ENCODE measurements at regions of chr2 and their contacts with region 1.

Region 1: DNA sequence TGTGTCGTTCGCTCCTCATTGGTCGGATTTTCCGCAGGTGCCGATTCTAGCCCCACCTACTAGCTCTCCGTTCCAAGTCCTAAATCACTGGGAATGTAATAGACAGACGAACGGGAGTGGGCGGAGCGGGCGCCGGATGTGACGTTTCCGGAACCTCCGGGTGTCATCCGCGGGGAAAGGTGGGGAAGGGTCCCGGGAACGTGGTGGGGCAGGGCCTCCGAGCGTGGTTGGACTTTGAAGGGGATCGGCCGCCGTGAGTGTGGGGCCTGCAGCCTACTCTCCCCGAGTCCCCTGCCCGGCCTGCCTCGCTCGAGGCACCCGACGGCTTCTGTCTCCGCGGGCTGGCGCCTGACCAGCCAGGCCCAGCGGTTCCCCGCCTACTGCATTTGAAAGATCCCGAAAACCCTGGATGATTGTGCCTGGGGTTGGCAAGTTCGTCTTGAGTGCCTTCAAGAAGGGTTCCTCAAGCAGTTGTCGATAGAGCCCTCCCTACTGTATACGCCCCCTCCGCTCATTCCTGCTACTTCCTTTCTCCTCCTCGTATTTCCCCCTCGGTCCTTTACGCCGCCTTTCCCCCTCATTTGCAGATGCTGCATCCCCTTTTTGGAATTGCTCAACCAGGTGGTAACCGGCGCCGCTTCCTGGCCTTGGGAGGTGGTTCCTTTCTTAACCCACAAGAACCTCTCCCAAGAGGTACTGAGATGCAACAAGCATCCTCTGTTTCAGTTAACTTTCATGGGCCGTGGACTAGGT is at the start of gene STAMBP:
- DNase-seq: peak; percentile 94
- H3K4me3 ChIP-seq: peak within 1 kb of the TSS; percentile 86 to 96
- H3K27ac ChIP-seq: peak within 1 kb of the TSS; percentile 87 to 88
- H3K4me1 ChIP-seq: peaks cover 14 to 19% of the 10 kb centered on the region in 2 experiments; a peak in 3 of 4 replicates
- H3K27me3 ChIP-seq: no peaks in the 10 kb centered on the region
- CTCF ChIP-seq: no peak
- EP300 ChIP-seq: no peak
- RAD21 ChIP-seq: no peak
- polyA plus RNA-seq, gene STAMBP: 42.2 and 54.5 TPM in 2 replicates

Region 2: GRCh38 chr2:73812635-73813034 is 16.4 kb before region 1 on chr2:
- CTCF ChIA-PET with region 1: interaction called, 25 read pairs
- POLR2A ChIA-PET with region 1: no interaction called
- DNase-seq: no peak
- H3K4me3 ChIP-seq: no peak overlapping the region
- H3K27ac ChIP-seq: no peak overlapping the region
- H3K4me1 ChIP-seq: no peaks in the 10 kb centered on the region
- H3K27me3 ChIP-seq: peaks cover 6% of the 10 kb centered on the region; the same call in 1 of the 2 replicates
- CTCF ChIP-seq: no peak
- EP300 ChIP-seq: no peak
- RAD21 ChIP-seq: no peak

Region 3: GRCh38 chr2:73839652-73840411 is 10.8 kb after region 1 on chr2:
- CTCF ChIA-PET with region 1: interaction called, 11 read pairs
- POLR2A ChIA-PET with region 1: no interaction called
- DNase-seq: no peak
- H3K4me3 ChIP-seq: no peak overlapping the region
- H3K27ac ChIP-seq: no peak overlapping the region; a peak in 1 of 4 replicates
- H3K4me1 ChIP-seq: peaks cover 0 to 9% of the 10 kb centered on the region in 2 experiments; a peak in 2 of 4 replicates
- H3K27me3 ChIP-seq: no peaks in the 10 kb centered on the region
- CTCF ChIP-seq: no peak
- EP300 ChIP-seq: no peak
- RAD21 ChIP-seq: no peak

Region 4: DNA sequence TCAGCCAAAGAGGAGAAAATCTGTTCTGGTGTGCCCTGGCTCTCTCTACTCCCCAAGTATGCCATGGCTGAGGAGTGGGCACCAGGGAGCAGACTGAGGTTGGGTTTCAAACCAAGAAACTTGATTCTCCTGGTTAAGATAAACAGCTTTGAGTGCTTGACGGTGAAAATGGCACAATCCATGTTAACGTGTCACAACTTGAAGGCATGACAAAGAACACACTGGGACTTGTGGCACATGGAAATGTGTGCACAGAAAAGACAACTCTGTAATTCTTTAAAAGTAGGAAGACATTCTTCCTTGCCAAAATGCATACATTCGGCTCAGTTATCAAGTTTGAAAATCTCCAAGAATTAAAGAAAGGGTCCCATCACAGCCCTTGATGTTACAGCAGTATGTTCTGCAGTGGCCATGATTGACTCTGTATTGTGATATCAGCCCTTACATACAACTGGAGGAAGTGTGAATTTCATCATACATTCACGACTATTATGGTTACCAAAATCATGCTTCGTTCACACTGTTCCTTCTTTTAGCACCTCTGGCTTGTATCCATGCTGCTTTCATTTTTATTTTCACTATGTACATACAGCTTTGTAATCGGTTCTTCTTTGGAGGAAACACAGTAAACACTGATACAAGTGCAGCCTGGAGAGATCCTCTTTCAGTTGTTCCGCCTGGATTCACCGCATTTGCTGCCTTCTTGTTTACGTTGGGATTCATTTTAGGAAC is 48.2 kb after region 1 on chr2:
- CTCF ChIA-PET with region 1: no interaction called
- POLR2A ChIA-PET with region 1: no interaction called
- DNase-seq: no peak
- H3K4me3 ChIP-seq: no peak overlapping the region
- H3K27ac ChIP-seq: no peak overlapping the region
- H3K4me1 ChIP-seq: no peaks in the 10 kb centered on the region
- H3K27me3 ChIP-seq: no peaks in the 10 kb centered on the region
- CTCF ChIP-seq: no peak
- EP300 ChIP-seq: no peak
- RAD21 ChIP-seq: no peak

Region 5: GRCh38 chr2:73987109-73987947 is 158.3 kb after region 1 on chr2:
- CTCF ChIA-PET with region 1: interaction called, 14 read pairs
- POLR2A ChIA-PET with region 1: no interaction called
- DNase-seq: peak; percentile 62
- H3K4me3 ChIP-seq: peak overlapping the region; percentile 41 to 42
- H3K27ac ChIP-seq: 0 out of 4 replicates have a peak overlapping the region, but pooled peaks of 1 of the 2 experiments have one; percentile 34
- H3K4me1 ChIP-seq: peaks cover 6 to 46% of the 10 kb centered on the region in 2 experiments; a peak in 3 of 4 replicates
- H3K27me3 ChIP-seq: no peaks in the 10 kb centered on the region
- CTCF ChIP-seq: peak; percentile 45
- EP300 ChIP-seq: no peak
- RAD21 ChIP-seq: peak; percentile 59

Region 6: DNA sequence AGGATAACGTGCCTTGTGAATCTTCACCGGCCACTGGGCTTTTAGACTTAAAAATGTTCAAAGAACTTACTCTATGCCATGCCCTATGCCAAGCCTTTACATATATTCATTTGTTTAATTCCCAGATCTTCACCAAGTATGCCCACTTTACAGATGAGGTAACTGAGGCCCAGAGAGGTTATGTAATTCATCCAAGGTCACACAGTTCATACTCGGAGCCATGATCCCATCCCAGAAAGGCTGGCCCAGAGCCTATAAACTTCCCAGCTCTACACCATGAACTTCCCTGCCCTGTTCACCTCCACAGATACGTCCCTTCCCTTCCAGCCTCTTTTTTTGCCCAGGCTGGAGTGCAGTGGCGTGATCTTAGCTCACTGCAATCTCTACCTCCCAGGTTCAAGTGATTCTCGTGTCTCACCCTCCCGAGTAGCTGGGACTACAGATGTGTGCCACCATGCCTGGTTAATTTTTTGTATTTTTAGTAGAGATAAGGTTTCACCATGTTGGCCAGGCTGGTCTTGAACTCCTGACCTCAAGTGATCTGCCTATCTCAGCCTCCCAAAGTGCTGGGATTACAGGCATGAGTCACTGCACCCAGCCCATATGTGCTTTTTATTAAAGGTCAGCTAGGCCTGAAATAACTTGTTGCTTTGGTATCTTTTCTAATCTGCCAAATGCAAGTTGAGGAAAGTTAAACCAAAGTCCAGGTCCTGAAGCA is 413.5 kb after region 1 on chr2:
- CTCF ChIA-PET with region 1: no interaction called
- POLR2A ChIA-PET with region 1: no interaction called
- DNase-seq: no peak
- H3K4me3 ChIP-seq: no peak overlapping the region
- H3K27ac ChIP-seq: no peak overlapping the region
- H3K4me1 ChIP-seq: no peaks in the 10 kb centered on the region
- H3K27me3 ChIP-seq: no peaks in the 10 kb centered on the region
- CTCF ChIP-seq: no peak
- EP300 ChIP-seq: no peak
- RAD21 ChIP-seq: no peak